ENCODE measurements at regions of chr1 and their contacts with region 1.

Region 1: GRCh38 chr1:161721738-161722343 is 497 bp downstream of the FCRLB start:
- DNase-seq: no peak
- ATAC-seq: no peak
- H3K4me3 ChIP-seq: no peak overlapping the region
- H3K27ac ChIP-seq: no peak overlapping the region
- H3K4me1 ChIP-seq: no peaks in the 10 kb centered on the region
- H3K27me3 ChIP-seq: no peaks in the 10 kb centered on the region
- CTCF ChIP-seq: no peak

Region 2: DNA sequence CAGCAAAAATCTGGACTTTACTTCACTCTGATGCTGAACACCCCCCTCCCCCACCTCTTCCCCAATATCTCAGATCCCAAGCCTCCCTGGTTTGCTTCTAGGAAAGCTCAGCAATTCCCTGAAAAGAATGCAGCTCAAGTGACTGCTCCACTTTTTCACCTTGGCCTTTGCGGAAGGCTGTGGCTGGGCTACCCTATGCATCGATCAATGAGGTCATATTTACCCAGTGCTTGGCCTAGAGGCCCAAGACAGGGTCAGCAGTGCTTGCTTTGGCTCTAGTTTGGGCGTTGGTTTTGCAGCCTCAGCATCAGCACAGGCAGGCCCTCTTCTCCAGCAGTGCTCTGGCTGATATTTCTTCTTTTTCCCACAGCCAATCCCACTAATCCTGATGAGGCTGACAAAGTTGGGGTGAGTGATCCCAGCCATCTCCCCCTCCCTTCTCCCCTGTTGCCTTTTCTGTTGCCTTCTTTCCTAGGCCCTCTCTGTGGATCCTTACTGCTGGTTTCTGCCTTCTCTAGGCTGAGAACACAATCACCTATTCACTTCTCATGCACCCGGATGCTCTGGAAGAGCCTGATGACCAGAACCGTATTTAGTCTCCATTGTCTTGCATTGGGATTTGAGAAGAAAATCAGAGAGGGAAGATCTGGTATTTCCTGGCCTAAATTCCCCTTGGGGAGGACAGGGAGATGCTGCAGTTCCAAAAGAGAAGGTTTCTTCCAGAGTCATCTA is 44.7 kb before region 1 on chr1:
- CTCF ChIA-PET with region 1: no interaction called
- POLR2A ChIA-PET with region 1: interaction called, 13 read pairs
- in situ Hi-C with region 1: no loop called
- intact Hi-C with region 1: no loop called
- DNase-seq: no peak
- ATAC-seq: no peak
- H3K4me3 ChIP-seq: no peak overlapping the region
- H3K27ac ChIP-seq: no peak overlapping the region
- H3K4me1 ChIP-seq: no peaks in the 10 kb centered on the region
- H3K27me3 ChIP-seq: peaks cover 3% of the 10 kb centered on the region; the same call in 1 of the 2 replicates
- CTCF ChIP-seq: no peak

Region 3: DNA sequence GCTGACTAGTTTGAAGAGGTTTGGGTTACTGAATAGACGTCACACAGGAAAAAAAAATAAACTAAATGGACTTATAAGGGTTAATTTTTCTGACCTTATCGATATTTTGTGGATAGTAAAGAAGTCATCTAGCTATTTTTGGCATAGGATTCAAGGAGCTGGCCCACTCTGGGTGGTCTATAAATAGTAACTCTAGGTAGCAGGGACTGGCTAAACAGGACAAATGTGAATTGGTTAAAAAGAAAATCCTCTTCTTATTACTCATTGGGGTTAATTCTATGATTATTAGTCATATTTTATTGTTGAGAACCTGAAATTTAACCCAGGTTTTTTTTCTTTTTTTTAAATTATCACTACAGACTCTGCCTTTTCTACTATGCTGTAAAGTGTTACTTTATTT is 105.9 kb after region 1 on chr1:
- CTCF ChIA-PET with region 1: no interaction called
- POLR2A ChIA-PET with region 1: no interaction called
- in situ Hi-C with region 1: no loop called
- intact Hi-C with region 1: no loop called
- DNase-seq: no peak
- ATAC-seq: no peak
- H3K4me3 ChIP-seq: no peak overlapping the region
- H3K27ac ChIP-seq: no peak overlapping the region
- H3K4me1 ChIP-seq: no peaks in the 10 kb centered on the region
- H3K27me3 ChIP-seq: no peaks in the 10 kb centered on the region
- CTCF ChIP-seq: no peak